Activated B cell treated with CpG ODN at 0.5 μM for 24 hours (primary cell): ENCODE measurements at regions of chr12 and their contacts with region 1.

Region 1: GRCh38 chr12:47705566-47706425 is at the start of gene RPAP3:
- DNase-seq: peak; percentile 96
- ATAC-seq: peak; percentile 90
- H3K4me3 Mint-ChIP-seq: peak within 1 kb of the TSS; percentile 97
- H3K27ac Mint-ChIP-seq: peak within 1 kb of the TSS; percentile 98
- H3K4me1 Mint-ChIP-seq: peaks cover 76% of the 10 kb centered on the region
- H3K27me3 Mint-ChIP-seq: no peaks in the 10 kb centered on the region
- CTCF ChIP-seq: no peak
- total RNA-seq, gene RPAP3: 58.4 and 60.5 TPM in 2 replicates

Region 2: DNA sequence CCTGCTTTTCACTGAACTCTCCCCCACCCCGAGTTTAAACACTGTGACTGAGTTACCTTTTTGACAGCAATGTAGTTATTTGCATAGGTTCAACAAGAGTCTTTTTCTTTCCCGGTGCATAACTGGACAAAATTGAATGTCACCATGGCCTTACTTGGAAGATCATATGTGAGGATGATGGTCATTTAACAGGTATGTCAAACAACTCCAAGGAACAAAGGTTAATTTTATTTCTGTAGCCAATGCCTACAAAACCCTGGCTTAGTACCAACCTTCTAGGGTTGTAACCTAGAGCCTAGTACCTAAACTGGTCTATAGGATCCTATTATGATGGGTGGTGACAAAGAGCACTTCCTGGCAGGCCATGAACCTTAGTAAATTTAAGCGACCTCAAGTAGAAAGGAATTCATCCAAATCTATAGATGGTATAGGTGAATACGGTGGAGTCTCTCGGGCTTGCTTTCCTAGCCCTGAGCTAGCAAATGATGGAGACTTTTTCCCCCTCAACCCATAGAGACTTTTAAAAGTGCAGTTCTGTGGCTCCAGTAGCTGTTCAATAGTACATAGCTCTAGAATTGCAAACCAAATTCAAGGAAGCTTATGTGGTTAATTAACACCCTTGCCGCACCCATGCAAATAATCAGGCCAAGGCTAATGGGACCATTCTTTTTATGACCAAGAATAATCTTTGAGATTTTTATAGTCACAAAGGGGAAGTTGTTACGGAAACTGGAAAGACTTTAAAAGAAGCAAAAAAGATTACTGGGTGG is 1525.9 kb before region 1 on chr12:
- CTCF ChIA-PET with region 1: no interaction called
- POLR2A ChIA-PET with region 1: no interaction called
- intact Hi-C with region 1: loop called (anchors 10 kb)
- DNase-seq: no peak
- ATAC-seq: peak; percentile 60
- H3K4me3 Mint-ChIP-seq: peak overlapping the region; percentile 69
- H3K27ac Mint-ChIP-seq: peak overlapping the region; percentile 82
- H3K4me1 Mint-ChIP-seq: peaks cover 98% of the 10 kb centered on the region
- H3K27me3 Mint-ChIP-seq: no peaks in the 10 kb centered on the region
- CTCF ChIP-seq: no peak

Region 3: DNA sequence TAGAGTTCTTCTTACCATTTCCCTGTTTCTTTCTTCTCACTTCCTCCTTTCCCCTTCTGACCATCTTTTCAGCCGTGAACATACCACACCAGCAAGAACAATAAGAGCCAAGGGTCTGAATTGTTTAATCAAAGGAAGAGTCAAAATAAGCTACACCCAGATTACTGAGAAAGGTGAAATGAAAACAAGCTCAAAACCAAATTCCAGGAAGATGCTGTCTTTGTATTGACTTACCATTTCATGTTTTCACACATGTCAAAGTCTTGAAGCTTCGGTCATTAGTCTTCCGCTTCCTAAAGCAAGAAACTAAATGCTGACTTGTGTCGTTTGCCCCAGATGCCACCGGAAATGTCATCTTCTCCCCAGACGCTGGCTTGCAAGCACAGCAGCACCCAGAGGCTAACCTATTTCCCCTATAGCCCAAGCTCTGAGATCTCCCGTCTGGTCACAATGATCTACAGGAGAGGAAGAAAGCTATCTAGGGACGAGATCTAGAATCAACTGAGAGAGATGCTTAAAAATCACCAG is 489.6 kb before region 1 on chr12:
- CTCF ChIA-PET with region 1: no interaction called
- POLR2A ChIA-PET with region 1: interaction called, 3 read pairs
- intact Hi-C with region 1: loop called (anchors 5 kb)
- DNase-seq: peak; percentile 42
- ATAC-seq: peak; percentile 80
- H3K4me3 Mint-ChIP-seq: peak overlapping the region; percentile 88
- H3K27ac Mint-ChIP-seq: peak overlapping the region; percentile 96
- H3K4me1 Mint-ChIP-seq: peaks cover 77% of the 10 kb centered on the region
- H3K27me3 Mint-ChIP-seq: no peaks in the 10 kb centered on the region
- CTCF ChIP-seq: no peak

Region 4: GRCh38 chr12:47725893-47726292 is 20.1 kb after region 1 on chr12:
- CTCF ChIA-PET with region 1: interaction called, 3 read pairs
- POLR2A ChIA-PET with region 1: interaction called, 6 read pairs
- intact Hi-C with region 1: loop called (anchors 2 kb)
- DNase-seq: no peak
- ATAC-seq: peak; percentile 92
- H3K4me3 Mint-ChIP-seq: no peak overlapping the region
- H3K27ac Mint-ChIP-seq: peak overlapping the region; percentile 65
- H3K4me1 Mint-ChIP-seq: peaks cover 37% of the 10 kb centered on the region
- H3K27me3 Mint-ChIP-seq: no peaks in the 10 kb centered on the region
- CTCF ChIP-seq: no peak

Region 5: GRCh38 chr12:47812797-47813510 is 107.2 kb after region 1 on chr12:
- CTCF ChIA-PET with region 1: no interaction called
- POLR2A ChIA-PET with region 1: interaction called, 30 read pairs
- intact Hi-C with region 1: loop called (anchors 1 kb)
- DNase-seq: peak; percentile 83
- ATAC-seq: peak; percentile 74
- H3K4me3 Mint-ChIP-seq: peak overlapping the region; percentile 84
- H3K27ac Mint-ChIP-seq: peak overlapping the region; percentile 99
- H3K4me1 Mint-ChIP-seq: peaks cover 97% of the 10 kb centered on the region
- H3K27me3 Mint-ChIP-seq: no peaks in the 10 kb centered on the region
- CTCF ChIP-seq: no peak

Region 6: DNA sequence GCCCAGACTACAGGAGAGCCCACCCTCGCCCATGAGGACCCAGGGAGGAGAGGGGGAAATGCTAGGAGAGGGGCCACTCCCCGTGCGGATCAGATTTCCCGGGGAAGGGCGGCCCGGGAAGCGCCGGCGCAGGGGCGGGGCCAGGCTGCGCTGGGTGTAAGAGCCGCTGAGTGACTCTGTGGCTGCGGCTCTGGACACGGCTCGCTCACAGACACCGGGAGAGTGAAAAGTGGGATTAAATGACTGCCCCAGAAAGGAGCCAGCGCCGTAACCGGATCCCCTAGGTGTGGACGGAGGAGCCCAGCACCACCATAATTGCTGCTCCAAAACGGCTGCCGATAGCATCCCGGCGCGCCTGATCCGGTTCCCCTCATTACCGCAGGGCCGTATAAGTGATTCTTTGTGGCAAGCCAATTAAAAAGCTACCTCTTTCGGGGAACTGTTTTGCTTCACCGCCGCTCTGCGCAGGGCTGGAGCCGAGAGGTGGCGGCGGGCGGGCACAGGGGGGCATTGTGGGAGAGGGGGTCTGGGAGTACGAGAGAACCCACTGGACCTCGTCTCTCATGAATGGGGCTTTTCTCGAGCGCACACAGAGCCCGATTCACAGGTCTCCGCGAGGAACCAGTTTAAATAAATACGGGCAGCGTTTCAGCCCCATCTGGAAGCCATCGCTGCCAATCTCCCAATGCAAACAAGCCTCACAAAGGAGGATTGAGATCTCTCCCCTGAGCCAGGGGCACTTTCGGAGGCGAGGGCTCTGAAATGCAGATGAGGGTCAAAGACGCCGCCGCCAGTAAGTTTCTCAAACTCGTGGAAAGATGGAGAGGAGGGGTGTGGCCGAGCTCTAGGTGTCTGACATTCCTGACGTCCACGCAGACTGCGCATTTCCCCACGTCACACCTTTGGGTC is 296.0 kb after region 1 on chr12:
- CTCF ChIA-PET with region 1: no interaction called
- POLR2A ChIA-PET with region 1: no interaction called
- intact Hi-C with region 1: no loop called
- DNase-seq: no peak
- ATAC-seq: peak; percentile 21
- H3K4me3 Mint-ChIP-seq: peak overlapping the region; percentile 71
- H3K27ac Mint-ChIP-seq: no peak overlapping the region
- H3K4me1 Mint-ChIP-seq: peaks cover 36% of the 10 kb centered on the region
- H3K27me3 Mint-ChIP-seq: peaks cover 80% of the 10 kb centered on the region
- CTCF ChIP-seq: no peak

Region 7: GRCh38 chr12:48105862-48106680 is 400.3 kb after region 1 on chr12 and contains the start of gene SENP1:
- CTCF ChIA-PET with region 1: no interaction called
- POLR2A ChIA-PET with region 1: interaction called, 3 read pairs
- intact Hi-C with region 1: loop called (anchors 1 kb)
- DNase-seq: peak; percentile 87
- ATAC-seq: peak; percentile 78
- H3K4me3 Mint-ChIP-seq: peak within 1 kb of the TSS; percentile 95
- H3K27ac Mint-ChIP-seq: peak within 1 kb of the TSS; percentile 98
- H3K4me1 Mint-ChIP-seq: peaks cover 49% of the 10 kb centered on the region
- H3K27me3 Mint-ChIP-seq: no peaks in the 10 kb centered on the region
- CTCF ChIP-seq: no peak
- total RNA-seq, gene SENP1: 42.8 and 43.2 TPM in 2 replicates